Heart right ventricle (tissue), 16 donors: ENCODE measurements at regions of chr17 and their contacts with region 1.

Region 1: DNA sequence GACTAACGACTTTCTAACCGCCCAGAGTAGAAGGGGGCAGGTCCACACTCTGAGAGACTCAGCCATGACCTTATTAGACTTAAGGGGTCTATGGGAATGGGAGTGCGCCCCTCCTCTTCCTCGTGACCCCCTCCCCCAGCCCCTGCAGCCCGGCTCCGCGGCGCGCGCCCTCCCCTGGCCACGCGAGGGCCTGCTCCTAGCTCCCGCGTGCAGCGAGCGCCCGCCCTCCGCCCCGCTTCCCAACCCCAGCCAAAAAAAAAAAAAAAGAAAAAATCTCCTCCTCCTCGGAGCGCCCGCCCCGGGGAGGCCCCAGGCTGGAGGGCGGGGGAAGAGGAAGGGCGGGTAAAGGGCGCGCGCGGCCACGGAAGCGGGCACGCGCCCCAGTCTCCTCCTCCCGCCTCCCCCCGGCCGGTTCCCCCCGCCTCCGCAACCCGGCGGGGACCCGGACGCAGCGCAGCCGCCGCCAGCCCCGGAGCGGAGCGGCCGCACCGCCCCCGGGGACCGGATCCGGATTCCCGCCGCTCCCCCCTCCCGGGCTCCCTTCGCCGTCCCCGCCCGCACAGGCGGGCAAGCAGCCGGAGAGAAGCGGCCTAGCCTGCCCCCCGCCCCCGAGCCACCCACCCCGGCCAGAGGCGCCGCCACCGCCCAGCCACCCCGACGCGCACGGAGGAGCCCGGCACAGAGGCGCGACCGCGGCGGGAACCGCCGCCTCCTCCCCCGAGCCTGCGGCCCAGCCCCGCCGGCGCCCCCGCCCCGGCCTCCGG is 949 bp downstream of the UBTF start:
- DNase-seq: peak; percentile 89 to 92
- ATAC-seq: peak; percentile 71 to 84 (median 76)
- H3K4me3 ChIP-seq: peak overlapping the region; percentile 64 to 98 (median 92)
- H3K27ac ChIP-seq: peak overlapping the region; percentile 98 to 100 (median 100)
- H3K4me1 ChIP-seq: peaks cover 7 to 50% (median 38%) of the 10 kb centered on the region in 9 donors
- H3K27me3 ChIP-seq: no peaks in the 10 kb centered on the region
- CTCF ChIP-seq: peak; percentile 57 to 86 (median 70)

Region 2: DNA sequence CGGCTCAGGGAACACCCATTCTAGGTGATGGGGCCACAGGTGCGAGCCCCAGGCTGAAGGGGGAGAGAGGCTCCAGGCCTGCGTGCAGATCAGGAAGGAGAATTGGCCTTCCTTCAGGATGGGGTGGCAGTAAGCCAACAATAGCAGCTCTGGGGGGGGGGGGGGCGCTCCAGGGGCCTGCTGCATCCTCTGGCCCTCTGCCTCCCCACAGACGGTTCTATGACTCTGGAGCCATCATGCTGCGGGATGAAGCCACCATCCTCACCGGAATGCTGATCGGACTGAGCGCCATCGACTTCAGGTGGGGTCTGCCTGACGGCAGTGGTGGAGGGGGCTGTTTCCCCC is 96.0 kb after region 1 on chr17:
- intact Hi-C with region 1: no loop called
- DNase-seq: no peak
- ATAC-seq: no peak
- H3K4me3 ChIP-seq: peak overlapping the region in 2 of 10 donors; percentile 24 to 42
- H3K27ac ChIP-seq: no peak overlapping the region
- H3K4me1 ChIP-seq: peaks cover 4 to 14% (median 6%) of the 10 kb centered on the region in 9 donors
- H3K27me3 ChIP-seq: peaks cover 15 to 61% (median 52%) of the 10 kb centered on the region in 7 donors
- CTCF ChIP-seq: no peak

Region 3: GRCh38 chr17:44324571-44325275 is 106.2 kb after region 1 on chr17 and contains the start of gene SLC25A39:
- intact Hi-C with region 1: loop called in 8 of 10 experiments (anchors 1 to 5 kb)
- DNase-seq: peak; percentile 94 to 97
- ATAC-seq: peak; percentile 88 to 93 (median 92)
- H3K4me3 ChIP-seq: peak within 1 kb of the TSS; percentile 90 to 100 (median 98)
- H3K27ac ChIP-seq: peak within 1 kb of the TSS; percentile 79 to 98 (median 94)
- H3K4me1 ChIP-seq: peaks cover 9 to 41% (median 35%) of the 10 kb centered on the region in 9 donors
- H3K27me3 ChIP-seq: no peaks in the 10 kb centered on the region
- CTCF ChIP-seq: no peak
- total RNA-seq, gene SLC25A39: 36.3 to 54.7 (median 43.1) TPM